CD4-positive, alpha-beta memory T cell (primary cell): ENCODE measurements at regions of chr11 and their contacts with region 1.

Region 1: DNA sequence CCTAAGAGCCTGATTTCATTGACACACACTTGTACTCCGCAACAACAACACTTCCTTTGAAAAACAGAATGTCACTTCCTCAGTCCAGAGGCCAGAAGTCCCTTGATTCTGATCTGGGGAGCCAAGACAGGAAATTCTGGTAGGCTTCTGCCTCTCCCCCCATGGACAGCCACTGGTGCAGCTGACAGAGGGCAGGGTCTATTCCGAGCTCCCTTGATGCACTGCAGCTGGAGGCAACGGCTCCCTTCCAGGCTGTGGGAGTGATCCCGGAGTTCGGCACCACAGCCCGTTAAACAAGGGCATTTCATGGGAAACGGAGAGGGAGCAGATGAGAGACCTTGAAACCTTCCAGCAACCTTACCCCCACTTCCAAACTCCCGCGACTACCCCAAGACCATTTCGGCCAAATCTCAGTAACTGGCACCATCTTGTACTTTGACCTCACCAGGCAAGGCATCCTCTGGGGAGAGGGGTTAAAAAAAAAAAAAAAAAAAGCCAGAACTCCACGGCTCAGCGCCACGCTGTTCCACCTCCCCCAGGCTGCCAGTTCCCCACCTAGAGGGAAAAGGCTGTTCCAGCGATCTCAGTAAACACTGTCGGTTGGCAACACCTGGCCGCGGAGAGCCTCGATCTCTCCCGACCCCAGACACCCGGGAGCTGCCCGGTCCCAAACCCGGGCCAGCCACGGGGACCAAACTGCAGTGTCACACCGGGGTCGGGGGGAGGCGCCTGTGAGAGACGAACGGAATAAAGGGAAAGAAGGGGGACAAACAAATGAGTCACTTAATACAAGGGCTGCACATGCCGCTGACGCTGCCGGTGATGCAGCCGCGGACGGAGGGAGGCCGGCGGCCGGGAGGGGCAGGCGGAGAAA is 1.1 kb downstream of the GAB2 start:
- DNase-seq: peak; percentile 62 to 85 (median 68)
- H3K4me3 ChIP-seq: peak overlapping the region; percentile 34 to 50
- H3K4me3 Mint-ChIP-seq: peak overlapping the region; percentile 85 to 93 (median 90)
- H3K27ac ChIP-seq: peak overlapping the region; percentile 29
- H3K27ac Mint-ChIP-seq: peak overlapping the region; percentile 82 to 92 (median 89)
- H3K4me1 ChIP-seq: peaks cover 23% of the 10 kb centered on the region
- H3K4me1 Mint-ChIP-seq: peaks cover 15 to 34% (median 22%) of the 10 kb centered on the region in 4 donors
- H3K27me3 ChIP-seq: no peaks in the 10 kb centered on the region
- H3K27me3 Mint-ChIP-seq: peaks cover 5% of the 10 kb centered on the region in 2 donors

Region 2: GRCh38 chr11:78139422-78140391 is 276.8 kb before region 1 on chr11 and contains the start of gene ALG8:
- CTCF ChIA-PET with region 1: interaction called, 8 read pairs
- POLR2A ChIA-PET with region 1: interaction called, 12 read pairs
- intact Hi-C with region 1: loop called (anchors 2 kb)
- DNase-seq: peak; percentile 95 to 96 (median 96)
- H3K4me3 ChIP-seq: peak within 1 kb of the TSS; percentile 87 to 88
- H3K4me3 Mint-ChIP-seq: peak within 1 kb of the TSS; percentile 91 to 99 (median 95)
- H3K27ac ChIP-seq: peak within 1 kb of the TSS; percentile 74
- H3K27ac Mint-ChIP-seq: peak within 1 kb of the TSS; percentile 91 to 98 (median 95)
- H3K4me1 ChIP-seq: peaks cover 21% of the 10 kb centered on the region
- H3K4me1 Mint-ChIP-seq: peaks cover 24 to 37% (median 30%) of the 10 kb centered on the region in 4 donors
- H3K27me3 ChIP-seq: no peaks in the 10 kb centered on the region
- H3K27me3 Mint-ChIP-seq: no peaks in the 10 kb centered on the region
- total RNA-seq, gene ALG8: 27.6 to 31.2 TPM

Region 3: DNA sequence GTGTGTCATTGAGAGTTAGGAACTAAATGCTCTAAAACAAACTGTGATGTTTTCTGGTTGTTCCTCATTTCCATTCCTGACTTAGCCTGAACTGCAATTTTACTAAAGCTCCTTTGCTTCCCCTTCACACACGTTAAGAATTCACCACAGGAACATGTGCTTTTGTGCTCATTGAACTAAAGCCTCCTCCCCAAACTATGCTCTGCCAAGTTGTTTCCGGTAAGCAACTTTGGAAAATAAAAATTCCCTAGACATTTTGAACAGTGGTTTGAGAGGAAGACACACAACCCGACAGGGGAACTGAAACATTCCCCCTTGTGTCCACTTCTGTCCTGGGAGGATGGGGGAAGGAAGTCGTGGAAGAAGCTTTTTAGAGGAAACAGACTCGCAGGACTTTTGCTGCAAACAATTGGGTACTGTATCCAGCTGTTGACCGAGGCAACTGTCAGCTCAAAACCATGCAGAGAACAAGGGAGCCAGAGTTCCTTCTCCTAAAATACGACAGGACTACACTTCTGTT is 65.8 kb before region 1 on chr11:
- CTCF ChIA-PET with region 1: no interaction called
- POLR2A ChIA-PET with region 1: no interaction called
- intact Hi-C with region 1: no loop called
- DNase-seq: no peak
- H3K4me3 ChIP-seq: no peak overlapping the region
- H3K4me3 Mint-ChIP-seq: peak overlapping the region in 6 of 8 donors; percentile 21 to 65 (median 44)
- H3K27ac ChIP-seq: no peak overlapping the region
- H3K27ac Mint-ChIP-seq: peak overlapping the region in 5 of 7 donors; percentile 19 to 77 (median 52)
- H3K4me1 ChIP-seq: peaks cover 11% of the 10 kb centered on the region
- H3K4me1 Mint-ChIP-seq: peaks cover 11 to 23% (median 15%) of the 10 kb centered on the region in 4 donors
- H3K27me3 ChIP-seq: no peaks in the 10 kb centered on the region
- H3K27me3 Mint-ChIP-seq: peaks cover 1 to 3% of the 10 kb centered on the region in 2 donors

Region 4: GRCh38 chr11:78400702-78401101 is 15.8 kb before region 1 on chr11:
- CTCF ChIA-PET with region 1: interaction called, 10 read pairs
- POLR2A ChIA-PET with region 1: no interaction called
- intact Hi-C with region 1: no loop called
- DNase-seq: no peak
- H3K4me3 ChIP-seq: no peak overlapping the region
- H3K4me3 Mint-ChIP-seq: no peak overlapping the region
- H3K27ac ChIP-seq: no peak overlapping the region
- H3K27ac Mint-ChIP-seq: no peak overlapping the region
- H3K4me1 ChIP-seq: no peaks in the 10 kb centered on the region
- H3K4me1 Mint-ChIP-seq: peaks cover 0 to 6% (median 4%) of the 10 kb centered on the region in 4 donors
- H3K27me3 ChIP-seq: no peaks in the 10 kb centered on the region
- H3K27me3 Mint-ChIP-seq: no peaks in the 10 kb centered on the region

Region 5: DNA sequence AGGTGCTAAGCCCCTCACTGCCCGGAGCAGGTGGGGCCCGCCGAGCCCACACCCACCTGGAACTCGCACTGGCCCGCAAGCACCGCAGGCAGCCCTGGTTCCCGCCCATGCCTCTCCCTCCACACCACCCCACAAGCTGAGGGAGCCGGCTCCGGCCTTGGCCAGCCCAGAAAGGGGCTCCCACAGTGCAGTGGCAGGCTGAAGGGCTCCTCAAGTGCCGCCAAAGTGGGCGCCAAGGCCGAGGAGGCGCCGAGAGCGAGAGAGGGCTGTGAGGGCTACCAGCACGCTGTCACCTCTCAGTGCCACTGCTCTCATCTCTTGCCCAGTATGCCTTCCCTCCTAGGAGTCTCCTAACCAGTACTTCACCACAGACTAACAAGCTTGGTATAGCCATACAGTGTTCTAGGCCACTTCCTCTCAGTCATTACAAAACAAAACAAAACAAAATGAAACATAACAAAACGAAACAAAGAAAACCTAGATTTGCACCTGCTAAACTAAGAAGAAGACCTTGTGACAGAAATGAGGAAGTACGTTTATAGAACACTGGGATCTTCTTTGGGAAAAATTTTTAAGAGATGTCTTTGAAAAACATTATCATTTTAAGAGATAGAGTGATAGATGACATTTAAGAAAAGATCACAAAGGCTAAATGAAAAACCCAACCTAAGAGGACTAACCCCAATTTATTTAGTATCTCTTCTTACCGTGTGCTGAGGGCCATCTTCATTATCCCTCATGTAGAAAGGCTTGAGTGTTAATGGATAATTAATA is 48.8 kb after region 1 on chr11:
- CTCF ChIA-PET with region 1: interaction called, 4 read pairs
- POLR2A ChIA-PET with region 1: interaction called, 13 read pairs
- intact Hi-C with region 1: no loop called
- DNase-seq: peak; percentile 42 to 60 (median 55)
- H3K4me3 ChIP-seq: peak overlapping the region in 1 of 2 donors; percentile 13
- H3K4me3 Mint-ChIP-seq: peak overlapping the region; percentile 53 to 88 (median 84)
- H3K27ac ChIP-seq: peak overlapping the region; percentile 55
- H3K27ac Mint-ChIP-seq: peak overlapping the region; percentile 84 to 97 (median 92)
- H3K4me1 ChIP-seq: peaks cover 12% of the 10 kb centered on the region
- H3K4me1 Mint-ChIP-seq: peaks cover 16 to 21% (median 20%) of the 10 kb centered on the region in 4 donors
- H3K27me3 ChIP-seq: no peaks in the 10 kb centered on the region
- H3K27me3 Mint-ChIP-seq: no peaks in the 10 kb centered on the region

Region 6: GRCh38 chr11:78574386-78575381 is 158.1 kb after region 1 on chr11 and contains the start of gene NARS2:
- CTCF ChIA-PET with region 1: interaction called, 10 read pairs
- POLR2A ChIA-PET with region 1: interaction called, 28 read pairs
- intact Hi-C with region 1: no loop called
- DNase-seq: peak; percentile 94 to 98 (median 96)
- H3K4me3 ChIP-seq: peak within 1 kb of the TSS; percentile 46 to 47
- H3K4me3 Mint-ChIP-seq: peak within 1 kb of the TSS; percentile 92 to 99 (median 97)
- H3K27ac ChIP-seq: peak within 1 kb of the TSS; percentile 86
- H3K27ac Mint-ChIP-seq: peak within 1 kb of the TSS; percentile 91 to 100 (median 98)
- H3K4me1 ChIP-seq: peaks cover 28% of the 10 kb centered on the region
- H3K4me1 Mint-ChIP-seq: peaks cover 20 to 41% (median 29%) of the 10 kb centered on the region in 4 donors
- H3K27me3 ChIP-seq: no peaks in the 10 kb centered on the region
- H3K27me3 Mint-ChIP-seq: no peaks in the 10 kb centered on the region
- total RNA-seq, gene NARS2: 16.9 to 18.4 TPM